WTC11 (cell line): ENCODE measurements at regions of chr16 and their contacts with region 1.

Region 1: GRCh38 chr16:87636072-87636684 is 33.9 kb downstream of the JPH3 start:
- DNase-seq: peak; percentile 88
- ATAC-seq: peak; percentile 91
- H3K4me3 Mint-ChIP-seq: peak overlapping the region; percentile 43
- H3K27ac Mint-ChIP-seq: no peak overlapping the region
- H3K4me1 Mint-ChIP-seq: peaks cover 9% of the 10 kb centered on the region
- H3K27me3 Mint-ChIP-seq: no peaks in the 10 kb centered on the region
- CTCF ChIP-seq: peak; percentile 35; the same call in 1 of the 2 replicates

Region 2: DNA sequence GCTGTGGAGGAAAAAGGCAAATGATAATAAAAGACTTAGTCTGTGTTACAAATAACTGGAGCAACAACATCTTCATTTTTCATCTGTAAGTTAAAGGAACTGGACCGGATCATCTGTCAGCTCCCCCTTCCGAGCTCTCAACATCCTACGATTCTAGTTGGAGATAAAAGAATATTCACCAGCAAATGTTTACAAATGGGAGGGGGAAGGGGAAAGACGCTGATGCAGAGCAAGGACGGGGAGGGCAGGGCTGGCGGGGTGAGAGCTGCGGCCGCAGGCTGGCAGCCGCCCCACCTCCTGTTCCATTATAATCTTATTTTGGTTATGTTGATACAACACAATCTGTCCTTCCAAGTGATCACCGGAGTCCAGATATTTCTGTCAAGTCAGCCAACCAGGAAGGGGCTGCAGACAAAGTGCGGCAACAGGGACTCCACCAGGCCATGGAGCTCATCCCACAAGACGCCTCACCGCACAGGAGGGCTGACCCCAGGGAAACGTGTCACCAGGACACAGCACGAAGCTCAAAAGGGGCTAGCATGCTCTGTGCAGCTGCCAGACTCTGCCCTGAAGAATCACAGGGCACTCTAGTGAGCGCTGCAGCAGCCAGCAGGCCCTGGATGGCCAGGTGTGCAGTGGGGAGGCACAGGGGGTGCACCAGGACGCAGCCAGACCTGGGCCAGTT is 272.3 kb before region 1 on chr16:
- CTCF ChIA-PET with region 1: no interaction called
- POLR2A ChIA-PET with region 1: no interaction called
- DNase-seq: no peak
- ATAC-seq: no peak
- H3K4me3 Mint-ChIP-seq: no peak overlapping the region
- H3K27ac Mint-ChIP-seq: peak overlapping the region; percentile 64
- H3K4me1 Mint-ChIP-seq: peaks cover 6% of the 10 kb centered on the region
- H3K27me3 Mint-ChIP-seq: no peaks in the 10 kb centered on the region
- CTCF ChIP-seq: no peak

Region 3: GRCh38 chr16:87461466-87461991 is 174.6 kb before region 1 on chr16:
- CTCF ChIA-PET with region 1: interaction called, 17 read pairs
- POLR2A ChIA-PET with region 1: no interaction called
- DNase-seq: peak; percentile 94
- ATAC-seq: peak; percentile 99
- H3K4me3 Mint-ChIP-seq: peak overlapping the region; percentile 54
- H3K27ac Mint-ChIP-seq: peak overlapping the region; percentile 80
- H3K4me1 Mint-ChIP-seq: peaks cover 30% of the 10 kb centered on the region
- H3K27me3 Mint-ChIP-seq: no peaks in the 10 kb centered on the region
- CTCF ChIP-seq: no peak

Region 4: GRCh38 chr16:87560428-87561199 is 75.6 kb before region 1 on chr16:
- CTCF ChIA-PET with region 1: interaction called, 15 read pairs
- POLR2A ChIA-PET with region 1: no interaction called
- DNase-seq: peak; percentile 93
- ATAC-seq: peak; percentile 97
- H3K4me3 Mint-ChIP-seq: no peak overlapping the region
- H3K27ac Mint-ChIP-seq: no peak overlapping the region
- H3K4me1 Mint-ChIP-seq: no peaks in the 10 kb centered on the region
- H3K27me3 Mint-ChIP-seq: no peaks in the 10 kb centered on the region; the same call in 1 of the 2 replicates
- CTCF ChIP-seq: no peak

Region 5: DNA sequence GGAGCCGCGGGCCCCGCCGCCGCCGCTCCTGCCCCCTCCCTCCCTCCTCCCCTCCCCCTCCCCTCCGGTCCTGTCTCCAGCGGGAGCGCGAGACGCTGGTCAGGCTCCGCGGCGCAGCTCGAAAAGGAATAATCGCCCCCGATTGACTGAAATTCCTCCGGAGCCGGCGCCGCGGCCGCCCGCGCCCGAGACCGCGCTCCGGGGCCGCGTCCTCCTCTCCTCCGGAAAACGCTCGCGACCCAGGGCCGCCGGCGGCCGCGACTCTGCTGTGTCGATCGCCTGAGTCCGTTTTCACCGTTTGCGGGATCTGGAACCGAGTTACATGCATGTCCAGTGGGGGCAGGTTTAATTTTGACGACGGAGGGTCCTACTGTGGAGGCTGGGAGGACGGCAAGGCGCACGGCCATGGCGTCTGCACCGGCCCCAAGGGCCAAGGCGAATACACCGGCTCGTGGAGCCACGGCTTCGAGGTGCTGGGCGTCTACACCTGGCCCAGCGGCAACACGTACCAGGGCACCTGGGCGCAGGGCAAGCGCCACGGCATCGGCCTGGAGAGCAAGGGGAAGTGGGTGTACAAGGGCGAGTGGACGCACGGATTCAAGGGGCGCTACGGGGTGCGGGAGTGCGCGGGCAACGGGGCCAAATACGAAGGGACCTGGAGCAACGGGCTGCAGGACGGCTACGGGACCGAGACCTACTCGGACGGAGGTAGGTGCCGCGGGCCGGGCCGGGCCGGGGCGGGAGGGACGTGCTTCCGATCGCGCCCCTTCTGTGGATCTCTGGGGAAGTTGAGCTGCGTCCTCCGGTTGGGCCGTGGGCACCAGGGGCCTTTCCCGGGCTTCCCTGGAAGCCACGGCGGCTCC is 33.1 kb before region 1 on chr16:
- CTCF ChIA-PET with region 1: interaction called, 50 read pairs
- POLR2A ChIA-PET with region 1: interaction called, 3 read pairs
- DNase-seq: peak; percentile 55
- ATAC-seq: peak; percentile 6
- H3K4me3 Mint-ChIP-seq: peak overlapping the region; percentile 97
- H3K27ac Mint-ChIP-seq: no peak overlapping the region
- H3K4me1 Mint-ChIP-seq: peaks cover 34% of the 10 kb centered on the region
- H3K27me3 Mint-ChIP-seq: peaks cover 17% of the 10 kb centered on the region
- CTCF ChIP-seq: no peak

Region 6: GRCh38 chr16:87621976-87622713 is 14.0 kb before region 1 on chr16:
- CTCF ChIA-PET with region 1: interaction called, 31 read pairs
- POLR2A ChIA-PET with region 1: no interaction called
- DNase-seq: no peak
- ATAC-seq: no peak
- H3K4me3 Mint-ChIP-seq: no peak overlapping the region
- H3K27ac Mint-ChIP-seq: peak overlapping the region; percentile 60
- H3K4me1 Mint-ChIP-seq: peaks cover 20% of the 10 kb centered on the region
- H3K27me3 Mint-ChIP-seq: no peaks in the 10 kb centered on the region
- CTCF ChIP-seq: no peak

Region 7: GRCh38 chr16:87678618-87679017 is 42.4 kb after region 1 on chr16:
- CTCF ChIA-PET with region 1: interaction called, 12 read pairs
- POLR2A ChIA-PET with region 1: no interaction called
- DNase-seq: peak; percentile 56
- ATAC-seq: peak; percentile 50
- H3K4me3 Mint-ChIP-seq: no peak overlapping the region
- H3K27ac Mint-ChIP-seq: no peak overlapping the region
- H3K4me1 Mint-ChIP-seq: peaks cover 6% of the 10 kb centered on the region
- H3K27me3 Mint-ChIP-seq: no peaks in the 10 kb centered on the region
- CTCF ChIP-seq: no peak

Region 8: GRCh38 chr16:87844120-87844733 is 208.0 kb after region 1 on chr16:
- CTCF ChIA-PET with region 1: no interaction called
- POLR2A ChIA-PET with region 1: no interaction called
- DNase-seq: peak; percentile 69
- ATAC-seq: peak; percentile 65
- H3K4me3 Mint-ChIP-seq: no peak overlapping the region
- H3K27ac Mint-ChIP-seq: peak overlapping the region; percentile 40; the same call in 1 of the 2 replicates
- H3K4me1 Mint-ChIP-seq: peaks cover 12% of the 10 kb centered on the region
- H3K27me3 Mint-ChIP-seq: no peaks in the 10 kb centered on the region
- CTCF ChIP-seq: peak; percentile 36; the same call in 1 of the 2 replicates